Activated CD4-positive, alpha-beta T cell treated with anti-CD3 and anti-CD28 coated beads for 36 hours (primary cell): ENCODE measurements at regions of chr4 and their contacts with region 1.

Region 1: DNA sequence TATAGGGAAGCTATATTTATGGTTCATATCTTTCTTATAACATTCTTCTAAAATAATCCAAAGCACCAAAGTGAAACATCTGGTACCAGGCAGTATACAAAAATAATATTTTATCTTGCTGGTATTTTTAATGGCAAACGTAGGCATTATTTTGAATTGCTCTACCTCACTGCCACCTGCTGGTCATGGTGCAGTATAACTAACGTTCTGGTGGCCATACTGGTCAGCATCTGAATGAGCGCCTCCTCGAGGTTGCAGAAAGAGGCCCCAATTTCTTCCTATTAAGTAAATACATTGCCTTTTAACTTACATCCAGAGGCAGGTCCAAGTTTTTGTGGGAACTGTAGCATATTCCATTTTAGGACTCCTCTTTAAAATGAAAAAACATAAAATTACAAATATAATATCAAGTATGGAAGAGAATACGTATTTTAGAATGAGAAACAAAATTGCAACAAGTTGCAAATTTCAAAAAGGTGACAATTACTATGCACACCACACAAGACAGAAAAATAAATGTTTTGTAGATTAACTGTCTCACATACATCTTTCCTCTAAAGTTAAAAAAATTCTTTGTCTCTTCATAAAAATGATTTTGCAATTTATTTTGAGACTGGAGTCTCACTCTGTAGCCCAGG is 22.9 kb upstream of the CWH43 start:
- DNase-seq: peak; percentile 86
- ATAC-seq: peak; percentile 89
- H3K4me3 Mint-ChIP-seq: no peak overlapping the region
- H3K27ac Mint-ChIP-seq: no peak overlapping the region
- H3K4me1 Mint-ChIP-seq: no peaks in the 10 kb centered on the region
- H3K27me3 Mint-ChIP-seq: no peaks in the 10 kb centered on the region

Region 2: GRCh38 chr4:48315728-48316630 is 647.2 kb before region 1 on chr4:
- CTCF ChIA-PET with region 1: no interaction called
- POLR2A ChIA-PET with region 1: no interaction called
- intact Hi-C with region 1: loop called in 1 of 2 experiments (anchors 5 kb)
- DNase-seq: peak; percentile 43
- ATAC-seq: peak; percentile 74
- H3K4me3 Mint-ChIP-seq: no peak overlapping the region
- H3K27ac Mint-ChIP-seq: no peak overlapping the region
- H3K4me1 Mint-ChIP-seq: peaks cover 4% of the 10 kb centered on the region
- H3K27me3 Mint-ChIP-seq: no peaks in the 10 kb centered on the region

Region 3: GRCh38 chr4:48578132-48578968 is 384.8 kb before region 1 on chr4:
- CTCF ChIA-PET with region 1: interaction called, 11 read pairs
- POLR2A ChIA-PET with region 1: no interaction called
- intact Hi-C with region 1: loop called (anchors 1 kb)
- DNase-seq: peak; percentile 63
- ATAC-seq: peak; percentile 78
- H3K4me3 Mint-ChIP-seq: no peak overlapping the region
- H3K27ac Mint-ChIP-seq: no peak overlapping the region
- H3K4me1 Mint-ChIP-seq: peaks cover 4% of the 10 kb centered on the region
- H3K27me3 Mint-ChIP-seq: no peaks in the 10 kb centered on the region

Region 4: GRCh38 chr4:48830706-48831531 is 132.2 kb before region 1 on chr4 and contains the start of gene OCIAD1:
- CTCF ChIA-PET with region 1: no interaction called
- POLR2A ChIA-PET with region 1: no interaction called
- intact Hi-C with region 1: loop called (anchors 1 to 5 kb)
- DNase-seq: peak; percentile 96
- ATAC-seq: peak; percentile 99
- H3K4me3 Mint-ChIP-seq: peak within 1 kb of the TSS; percentile 100
- H3K27ac Mint-ChIP-seq: peak within 1 kb of the TSS; percentile 100
- H3K4me1 Mint-ChIP-seq: peaks cover 23% of the 10 kb centered on the region
- H3K27me3 Mint-ChIP-seq: no peaks in the 10 kb centered on the region
- total RNA-seq, gene OCIAD1: 113 to 162 TPM

Region 5: GRCh38 chr4:48944756-48945241 is 18.4 kb before region 1 on chr4:
- CTCF ChIA-PET with region 1: interaction called, 16 read pairs
- POLR2A ChIA-PET with region 1: no interaction called
- intact Hi-C with region 1: no loop called
- DNase-seq: peak; percentile 80
- ATAC-seq: peak; percentile 77
- H3K4me3 Mint-ChIP-seq: no peak overlapping the region
- H3K27ac Mint-ChIP-seq: no peak overlapping the region
- H3K4me1 Mint-ChIP-seq: peaks cover 14% of the 10 kb centered on the region
- H3K27me3 Mint-ChIP-seq: no peaks in the 10 kb centered on the region

Region 6: GRCh38 chr4:48985976-48986653 is 23.0 kb after region 1 on chr4 and contains the start of gene CWH43:
- CTCF ChIA-PET with region 1: no interaction called
- POLR2A ChIA-PET with region 1: no interaction called
- intact Hi-C with region 1: no loop called
- DNase-seq: peak; percentile 8
- ATAC-seq: no peak
- H3K4me3 Mint-ChIP-seq: no peak within 1 kb of the TSS
- H3K27ac Mint-ChIP-seq: no peak within 1 kb of the TSS
- H3K4me1 Mint-ChIP-seq: no peaks in the 10 kb centered on the region
- H3K27me3 Mint-ChIP-seq: peaks cover 47% of the 10 kb centered on the region
- total RNA-seq, gene CWH43: not detected